ENCODE measurements at regions of chr1 and their contacts with region 1.

Region 1: DNA sequence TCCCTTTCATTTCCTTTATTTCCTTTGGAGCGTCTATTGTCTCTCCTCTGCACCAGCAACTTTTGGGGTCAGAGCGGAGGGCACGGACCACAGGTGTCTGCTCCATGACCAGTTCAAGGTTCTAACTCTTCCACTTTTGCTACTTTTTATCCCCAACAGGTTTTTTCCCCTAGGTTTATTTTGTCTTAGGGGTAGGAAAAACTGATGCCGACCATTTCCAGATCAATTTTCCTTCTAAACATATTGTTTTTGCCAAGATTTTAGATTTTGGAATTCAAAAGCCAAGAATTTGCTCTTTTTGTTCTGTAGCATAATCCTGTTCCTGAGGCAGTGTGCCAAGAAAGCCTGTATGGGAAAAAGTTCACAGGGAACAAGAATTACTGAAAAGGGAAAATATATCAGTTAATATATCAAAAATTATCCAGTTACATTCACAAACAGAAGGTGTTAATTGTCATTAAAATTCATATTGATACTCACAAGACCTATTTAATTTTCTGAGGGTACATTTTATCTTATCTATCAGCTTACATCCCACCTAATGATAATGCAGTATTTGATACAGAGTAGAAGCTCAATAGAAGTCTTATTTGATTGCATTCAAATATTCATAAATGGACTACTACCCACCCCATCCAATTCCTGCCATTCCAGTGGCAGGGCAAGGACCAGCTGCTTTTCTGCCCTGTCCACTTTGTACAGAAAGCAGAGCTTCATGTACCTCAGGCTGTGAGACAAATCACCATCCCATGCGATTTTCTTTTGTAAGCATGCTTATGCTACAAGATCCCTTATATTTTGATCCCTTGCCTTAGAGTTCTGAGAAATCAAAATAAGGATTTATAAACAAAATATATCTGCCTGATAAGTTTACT is 31.2 kb downstream of the TSEN15 start:
- DNase-seq: no peak
- H3K4me3 ChIP-seq: no peak overlapping the region
- H3K27ac ChIP-seq: no peak overlapping the region
- H3K4me1 ChIP-seq: peaks cover 5% of the 10 kb centered on the region
- H3K27me3 ChIP-seq: no peaks in the 10 kb centered on the region
- CTCF ChIP-seq: no peak
- POLR2A ChIP-seq: no peak

Region 2: DNA sequence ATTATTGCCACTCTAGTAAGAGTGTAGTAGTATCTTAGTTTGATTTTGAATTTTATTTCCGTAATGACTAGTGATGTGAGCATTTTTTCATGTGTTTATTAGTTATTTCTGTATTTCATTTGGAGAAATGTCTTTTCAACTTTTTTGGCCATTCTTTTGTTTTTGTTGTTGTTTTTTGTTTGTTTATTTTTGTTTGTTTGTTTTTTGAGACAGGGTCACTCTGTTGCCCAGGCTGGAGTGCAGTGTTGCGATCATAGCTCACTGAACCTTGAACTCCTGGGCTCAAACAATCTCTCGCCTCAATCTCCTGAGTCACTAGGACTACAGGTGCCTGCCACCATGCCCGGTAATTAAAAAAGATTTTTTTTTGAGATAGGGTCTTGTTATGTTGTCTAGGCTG is 44.7 kb after region 1 on chr1:
- intact Hi-C with region 1: no loop called
- DNase-seq: no peak
- H3K4me3 ChIP-seq: no peak overlapping the region
- H3K27ac ChIP-seq: no peak overlapping the region
- H3K4me1 ChIP-seq: no peaks in the 10 kb centered on the region
- H3K27me3 ChIP-seq: no peaks in the 10 kb centered on the region
- CTCF ChIP-seq: no peak
- POLR2A ChIP-seq: no peak

Region 3: GRCh38 chr1:184632415-184633175 is 549.8 kb after region 1 on chr1:
- intact Hi-C with region 1: no loop called
- DNase-seq: no peak
- H3K4me3 ChIP-seq: no peak overlapping the region
- H3K27ac ChIP-seq: no peak overlapping the region
- H3K4me1 ChIP-seq: peaks cover 32% of the 10 kb centered on the region
- H3K27me3 ChIP-seq: no peaks in the 10 kb centered on the region
- CTCF ChIP-seq: no peak
- POLR2A ChIP-seq: no peak

Region 4: DNA sequence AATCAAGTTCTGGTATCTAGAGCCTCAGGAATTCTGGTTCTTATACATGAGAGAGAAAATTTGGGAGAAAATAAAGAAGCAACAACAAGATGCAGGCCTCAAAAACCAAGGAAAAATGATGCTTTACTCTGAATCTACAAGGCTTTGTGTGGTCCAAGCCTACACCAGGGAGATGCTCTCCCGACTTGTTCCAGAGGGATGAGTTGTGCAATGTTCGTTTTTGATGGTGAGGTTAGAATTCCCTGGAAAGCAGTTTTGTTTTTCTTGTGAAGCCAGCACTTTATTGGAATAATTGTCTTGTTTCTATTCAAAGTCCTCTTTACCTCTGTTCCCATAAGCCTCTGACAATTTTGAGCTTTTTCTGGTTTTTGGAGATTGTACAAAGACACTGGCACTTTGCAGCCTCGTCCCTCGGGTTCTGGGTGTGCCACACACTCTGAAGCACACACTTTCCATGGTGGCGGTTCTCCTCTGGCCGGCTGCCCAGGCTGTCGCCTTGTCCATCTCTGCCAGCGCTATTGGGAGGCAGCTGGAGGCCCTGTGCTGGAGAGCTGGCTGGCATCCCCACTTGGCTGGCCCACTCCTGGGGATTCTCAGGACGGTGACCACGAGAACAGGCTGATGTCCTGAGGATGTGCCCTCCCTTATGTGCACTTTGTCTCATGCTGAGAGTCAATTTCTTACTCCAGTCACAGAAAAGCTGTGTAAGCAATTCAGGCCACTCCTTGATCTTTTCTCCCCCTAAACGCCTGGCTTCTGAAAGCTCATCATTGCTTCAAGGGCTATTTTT is 601.7 kb after region 1 on chr1:
- intact Hi-C with region 1: loop called (anchors 10 kb)
- DNase-seq: no peak
- H3K4me3 ChIP-seq: no peak overlapping the region
- H3K27ac ChIP-seq: no peak overlapping the region
- H3K4me1 ChIP-seq: peaks cover 11% of the 10 kb centered on the region
- H3K27me3 ChIP-seq: no peaks in the 10 kb centered on the region
- CTCF ChIP-seq: no peak
- POLR2A ChIP-seq: no peak

Measured in vagina (tissue), 2 donors.